A549 (cell line): ENCODE measurements at regions of chr1 and their contacts with region 1.

Region 1: GRCh38 chr1:153532769-153533599 is 2.8 kb downstream of the S100A6 start:
- DNase-seq: peak; percentile 91 to 93
- ATAC-seq: peak; percentile 36 to 63
- H3K4me3 ChIP-seq: peak overlapping the region; percentile 68
- H3K27ac ChIP-seq: peak overlapping the region; percentile 98 to 100
- H3K4me1 ChIP-seq: peaks cover 29% of the 10 kb centered on the region
- CTCF ChIP-seq: peak; percentile 92
- EP300 ChIP-seq: no peak
- POLR2A ChIP-seq: peak; percentile 40
- RAD21 ChIP-seq: peak; percentile 87 to 91

Region 2: DNA sequence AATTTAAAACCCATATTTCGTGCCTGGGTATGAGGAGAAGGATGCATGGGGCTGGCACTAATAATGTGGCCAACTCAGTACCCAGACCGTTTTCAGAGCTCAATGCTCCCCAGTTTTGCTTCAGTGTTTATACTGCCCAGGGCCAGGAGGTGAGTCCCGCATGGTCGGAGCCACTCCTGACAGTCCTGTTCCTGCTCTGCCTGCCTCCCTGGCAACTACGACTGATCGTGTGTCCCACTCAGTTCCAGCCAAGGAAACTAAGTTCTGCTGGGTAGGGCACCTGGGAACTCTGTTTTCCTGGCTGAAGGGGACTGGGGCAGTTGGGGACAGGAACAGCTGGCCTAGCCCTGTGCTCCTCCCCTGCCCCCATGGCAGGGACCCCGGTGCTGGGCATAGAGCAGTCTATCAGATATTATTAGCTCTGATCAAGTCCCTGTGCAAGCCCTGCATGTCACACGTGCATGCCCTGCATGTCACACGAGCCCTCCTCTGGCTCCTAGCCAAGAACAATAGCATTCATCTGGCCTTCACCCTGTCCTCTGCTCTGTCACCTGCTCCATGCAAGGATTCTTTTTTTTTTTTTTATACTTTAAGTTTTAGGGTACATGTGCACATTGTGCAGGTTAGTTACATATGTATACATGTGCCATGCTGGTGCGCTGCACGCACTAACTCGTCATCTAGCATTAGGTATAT is 91.6 kb before region 1 on chr1:
- CTCF ChIA-PET with region 1: no interaction called
- POLR2A ChIA-PET with region 1: no interaction called
- DNase-seq: no peak
- ATAC-seq: peak in 1 of 2 experiments; percentile 29; a peak in 1 of 6 replicates
- H3K4me3 ChIP-seq: no peak overlapping the region
- H3K27ac ChIP-seq: no peak overlapping the region
- H3K4me1 ChIP-seq: no peaks in the 10 kb centered on the region
- CTCF ChIP-seq: no peak
- EP300 ChIP-seq: no peak
- POLR2A ChIP-seq: no peak
- RAD21 ChIP-seq: no peak

Region 3: DNA sequence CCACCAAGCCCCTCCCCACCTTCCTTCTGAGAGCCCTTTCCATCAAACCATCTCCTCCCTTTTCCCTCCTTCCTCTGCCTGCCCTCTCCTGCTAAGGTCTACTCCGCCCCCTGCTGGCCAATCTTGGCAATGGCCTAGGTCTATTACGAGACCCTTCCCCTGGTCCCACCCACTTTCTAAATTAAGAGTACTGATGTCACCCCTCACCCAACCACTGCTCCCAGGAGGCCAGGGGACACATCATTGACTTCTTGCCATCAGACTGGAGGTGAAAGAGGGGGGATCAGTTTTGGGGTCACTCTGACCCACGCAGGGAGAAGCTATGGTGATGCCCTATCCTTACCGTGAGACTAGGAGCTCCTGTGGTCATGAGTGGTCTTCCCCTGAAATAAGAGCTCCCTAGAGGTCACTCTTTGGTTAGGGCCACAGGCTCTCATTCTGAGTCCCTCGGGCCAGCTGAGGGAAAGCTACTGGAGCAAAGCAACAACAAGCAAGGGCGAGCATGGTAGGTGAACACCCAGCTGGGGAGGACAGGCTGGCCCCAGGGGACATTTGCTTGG is 37.9 kb before region 1 on chr1:
- CTCF ChIA-PET with region 1: interaction called, 17 read pairs
- POLR2A ChIA-PET with region 1: no interaction called
- DNase-seq: peak; percentile 50 to 72
- ATAC-seq: peak; percentile 54 to 88; a peak in 4 of 6 replicates
- H3K4me3 ChIP-seq: no peak overlapping the region
- H3K27ac ChIP-seq: peak overlapping the region in 1 of 2 experiments; percentile 32; a peak in 2 of 6 replicates
- H3K4me1 ChIP-seq: peaks cover 18% of the 10 kb centered on the region
- CTCF ChIP-seq: peak; percentile 90
- EP300 ChIP-seq: no peak
- POLR2A ChIP-seq: no peak
- RAD21 ChIP-seq: peak; percentile 93 to 94

Region 4: DNA sequence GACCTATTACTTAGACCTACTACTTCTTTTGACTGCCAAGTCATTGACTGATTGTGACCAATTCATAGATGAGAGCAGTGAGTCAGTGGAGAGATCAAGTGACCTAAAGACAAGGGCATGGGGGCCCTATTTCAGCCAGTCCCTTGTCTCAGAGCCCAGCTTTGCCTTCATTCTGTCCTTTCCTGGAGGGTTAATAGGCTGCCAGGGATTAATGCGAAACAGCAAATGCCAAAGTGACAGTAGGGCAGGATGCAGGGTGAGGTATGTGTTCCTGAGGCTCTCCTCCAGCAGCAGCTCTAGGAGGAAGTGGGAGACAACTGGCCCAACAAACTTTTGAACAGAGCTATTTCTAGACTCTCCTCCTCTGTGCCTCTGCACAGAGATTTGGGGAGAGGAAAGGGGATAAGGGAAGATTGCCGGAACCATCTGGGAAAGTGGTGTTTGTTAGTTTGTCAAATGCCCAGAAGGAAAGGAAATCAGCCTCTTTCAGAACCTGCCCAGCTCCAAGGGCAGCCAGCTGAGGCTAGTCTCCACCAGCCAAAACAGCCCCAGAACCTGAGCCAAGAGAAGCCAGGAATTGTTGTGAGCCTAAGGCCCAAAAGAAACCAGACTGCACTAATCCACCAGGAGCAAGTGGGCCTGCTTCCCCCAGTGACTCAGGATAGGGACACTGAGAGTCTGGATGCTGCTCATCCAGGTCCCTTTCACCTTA is 21.0 kb after region 1 on chr1:
- CTCF ChIA-PET with region 1: interaction called, 135 read pairs
- POLR2A ChIA-PET with region 1: interaction called, 114 read pairs
- DNase-seq: no peak
- ATAC-seq: no peak
- H3K4me3 ChIP-seq: no peak overlapping the region
- H3K27ac ChIP-seq: peak overlapping the region; percentile 42 to 97; a peak in 3 of 6 replicates
- H3K4me1 ChIP-seq: peaks cover 40% of the 10 kb centered on the region
- CTCF ChIP-seq: no peak
- EP300 ChIP-seq: no peak
- POLR2A ChIP-seq: no peak
- RAD21 ChIP-seq: no peak

Region 5: DNA sequence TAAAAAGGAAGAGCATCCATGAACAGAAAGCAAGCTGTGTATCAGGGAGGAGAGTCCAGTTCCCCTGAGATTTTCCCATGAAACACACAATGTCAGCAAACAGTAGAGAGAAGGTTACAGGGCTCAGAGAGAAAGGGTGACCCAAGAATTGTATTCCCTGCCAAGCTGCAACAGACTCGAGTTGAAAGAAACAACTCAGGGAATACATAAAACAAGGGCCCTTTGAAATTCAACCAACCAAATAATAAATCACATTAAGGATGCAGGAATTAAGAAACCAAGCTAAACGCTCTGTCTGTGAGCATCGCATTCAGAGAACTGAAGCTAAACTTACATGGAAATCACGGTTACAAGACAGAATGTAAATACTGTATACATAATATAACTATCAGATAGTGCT is 59.8 kb after region 1 on chr1:
- CTCF ChIA-PET with region 1: interaction called, 13 read pairs
- POLR2A ChIA-PET with region 1: no interaction called
- DNase-seq: no peak
- ATAC-seq: no peak
- H3K4me3 ChIP-seq: no peak overlapping the region
- H3K27ac ChIP-seq: no peak overlapping the region
- H3K4me1 ChIP-seq: peaks cover 8% of the 10 kb centered on the region
- CTCF ChIP-seq: no peak
- EP300 ChIP-seq: no peak
- POLR2A ChIP-seq: no peak
- RAD21 ChIP-seq: no peak

Region 6: GRCh38 chr1:153633716-153634665 is 101.0 kb after region 1 on chr1 and contains the start of gene CHTOP:
- CTCF ChIA-PET with region 1: interaction called, 63 read pairs
- POLR2A ChIA-PET with region 1: interaction called, 20 read pairs
- DNase-seq: peak; percentile 97 to 99
- ATAC-seq: peak; percentile 89 to 94
- H3K4me3 ChIP-seq: peak within 1 kb of the TSS; percentile 90
- H3K27ac ChIP-seq: peak within 1 kb of the TSS; percentile 99 to 100
- H3K4me1 ChIP-seq: peaks cover 25% of the 10 kb centered on the region
- CTCF ChIP-seq: no peak
- EP300 ChIP-seq: no peak
- POLR2A ChIP-seq: peak; percentile 63
- RAD21 ChIP-seq: no peak
- polyA plus RNA-seq, gene CHTOP: 81.6 and 98.1 TPM in 2 replicates